MCF 10A (cell line): ENCODE measurements at regions of chr1 and their contacts with region 1.

Region 1: DNA sequence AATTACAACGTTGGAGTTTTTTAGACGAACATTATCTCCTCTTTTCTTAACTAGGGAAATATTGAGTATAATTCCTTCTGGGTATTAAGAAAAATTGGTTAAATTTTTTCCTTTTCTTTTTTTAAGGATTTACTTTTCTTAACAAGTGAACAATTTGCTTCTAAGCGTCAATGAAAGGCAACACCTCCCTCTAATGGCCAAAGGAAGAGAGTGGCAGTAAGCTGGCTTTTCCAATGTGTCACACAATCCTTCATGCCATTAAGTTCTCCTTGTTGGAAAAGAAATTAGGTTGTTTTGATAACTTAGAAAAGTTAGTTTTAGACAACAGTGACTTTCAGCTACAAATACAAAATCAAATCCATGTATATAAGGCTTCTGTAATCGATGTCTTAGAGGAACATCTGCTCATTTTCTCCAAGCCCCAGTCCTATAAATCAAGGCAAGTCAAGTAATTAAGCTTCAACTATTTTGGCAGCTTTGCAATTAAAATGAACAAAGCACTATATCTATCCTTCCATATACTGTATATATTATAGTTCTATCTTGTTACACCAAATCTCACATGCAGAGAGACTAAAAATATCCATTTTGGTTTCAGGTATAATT is 62.8 kb downstream of the EDEM3 start:
- DNase-seq: peak; percentile 72
- H3K4me3 Mint-ChIP-seq: no peak overlapping the region
- H3K27ac Mint-ChIP-seq: no peak overlapping the region
- H3K4me1 Mint-ChIP-seq: no peaks in the 10 kb centered on the region
- H3K27me3 Mint-ChIP-seq: no peaks in the 10 kb centered on the region
- CTCF ChIP-seq: peak; percentile 80

Region 2: DNA sequence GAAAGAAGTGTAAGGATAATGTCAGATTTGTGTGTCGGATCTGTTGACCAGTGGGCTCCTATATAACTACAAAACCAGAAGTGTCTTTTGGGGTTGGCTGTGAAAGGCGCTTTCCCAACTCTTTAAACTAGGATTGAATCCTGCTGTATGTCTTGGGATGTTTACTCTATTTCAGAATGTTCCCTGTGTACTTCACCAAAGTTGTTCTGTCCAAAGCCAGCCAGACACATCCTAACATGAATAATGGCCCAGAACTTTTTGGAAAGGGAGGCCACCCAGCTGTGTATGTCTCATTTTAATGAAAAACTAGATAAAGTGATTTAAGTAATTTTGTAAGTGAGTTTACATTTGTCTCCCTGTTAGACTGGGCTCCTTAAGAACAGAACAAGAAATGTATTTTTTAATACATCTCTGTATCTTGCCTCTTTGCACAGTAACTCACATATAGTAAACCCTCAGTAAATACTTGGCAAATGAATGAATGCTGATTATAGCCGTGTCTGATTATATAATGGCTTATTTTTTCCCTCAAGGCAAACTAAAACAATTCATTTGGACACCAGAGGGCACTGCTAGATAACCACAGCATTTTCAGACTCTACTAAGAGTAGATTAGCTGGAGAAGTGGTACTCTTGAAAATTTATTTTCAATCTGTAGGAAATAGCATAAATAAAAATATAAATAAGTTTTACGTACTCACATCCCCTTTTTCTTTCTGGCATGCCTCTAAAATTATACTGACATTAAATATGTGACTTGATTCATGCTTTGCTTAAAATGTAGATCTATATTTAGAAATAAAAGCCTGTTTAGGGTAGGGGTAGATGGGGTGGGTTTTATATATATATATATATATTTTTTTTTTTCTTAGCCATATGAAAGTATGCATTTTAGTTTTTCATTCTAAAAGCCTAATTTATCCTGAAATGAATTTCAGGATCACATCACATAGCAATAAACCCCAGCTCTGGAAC is 616.5 kb before region 1 on chr1:
- CTCF ChIA-PET with region 1: interaction called, 36 read pairs
- POLR2A ChIA-PET with region 1: interaction called, 3 read pairs
- intact Hi-C with region 1: loop called (anchors 1 kb)
- DNase-seq: peak; percentile 72
- H3K4me3 Mint-ChIP-seq: no peak overlapping the region
- H3K27ac Mint-ChIP-seq: no peak overlapping the region
- H3K4me1 Mint-ChIP-seq: no peaks in the 10 kb centered on the region
- H3K27me3 Mint-ChIP-seq: no peaks in the 10 kb centered on the region
- CTCF ChIP-seq: peak; percentile 90

Region 3: GRCh38 chr1:184242507-184242943 is 449.3 kb before region 1 on chr1:
- CTCF ChIA-PET with region 1: interaction called, 31 read pairs
- POLR2A ChIA-PET with region 1: interaction called, 3 read pairs
- intact Hi-C with region 1: no loop called
- DNase-seq: peak; percentile 40
- H3K4me3 Mint-ChIP-seq: no peak overlapping the region
- H3K27ac Mint-ChIP-seq: peak overlapping the region; percentile 1
- H3K4me1 Mint-ChIP-seq: no peaks in the 10 kb centered on the region
- H3K27me3 Mint-ChIP-seq: no peaks in the 10 kb centered on the region
- CTCF ChIP-seq: no peak

Region 4: GRCh38 chr1:184563308-184563707 is 128.5 kb before region 1 on chr1:
- CTCF ChIA-PET with region 1: interaction called, 11 read pairs
- POLR2A ChIA-PET with region 1: no interaction called
- intact Hi-C with region 1: loop called (anchors 5 kb)
- DNase-seq: peak; percentile 56
- H3K4me3 Mint-ChIP-seq: no peak overlapping the region
- H3K27ac Mint-ChIP-seq: no peak overlapping the region
- H3K4me1 Mint-ChIP-seq: peaks cover 32% of the 10 kb centered on the region
- H3K27me3 Mint-ChIP-seq: no peaks in the 10 kb centered on the region
- CTCF ChIP-seq: peak; percentile 57

Region 5: GRCh38 chr1:184805667-184806295 is 114.0 kb after region 1 on chr1:
- CTCF ChIA-PET with region 1: no interaction called
- POLR2A ChIA-PET with region 1: no interaction called
- intact Hi-C with region 1: no loop called
- DNase-seq: peak; percentile 95
- H3K4me3 Mint-ChIP-seq: no peak overlapping the region
- H3K27ac Mint-ChIP-seq: no peak overlapping the region
- H3K4me1 Mint-ChIP-seq: peaks cover 6% of the 10 kb centered on the region
- H3K27me3 Mint-ChIP-seq: peaks cover 46% of the 10 kb centered on the region
- CTCF ChIP-seq: peak; percentile 99